Activated T-helper 1 cell treated with anti-CD3 and anti-CD28 coated beads, Interleukin-12 subunit alpha, Interleukin-12 subunit beta, Interleukin-2, Interleukin-4 antibody, amounts not matched to agents 30 ng/mL and 10 ng/mL and 1 ng/mL, durations not matched to agents 14 hours and 24 hours and 36 hours (primary cell): ENCODE measurements at regions of chr1 and their contacts with region 1.

Region 1: DNA sequence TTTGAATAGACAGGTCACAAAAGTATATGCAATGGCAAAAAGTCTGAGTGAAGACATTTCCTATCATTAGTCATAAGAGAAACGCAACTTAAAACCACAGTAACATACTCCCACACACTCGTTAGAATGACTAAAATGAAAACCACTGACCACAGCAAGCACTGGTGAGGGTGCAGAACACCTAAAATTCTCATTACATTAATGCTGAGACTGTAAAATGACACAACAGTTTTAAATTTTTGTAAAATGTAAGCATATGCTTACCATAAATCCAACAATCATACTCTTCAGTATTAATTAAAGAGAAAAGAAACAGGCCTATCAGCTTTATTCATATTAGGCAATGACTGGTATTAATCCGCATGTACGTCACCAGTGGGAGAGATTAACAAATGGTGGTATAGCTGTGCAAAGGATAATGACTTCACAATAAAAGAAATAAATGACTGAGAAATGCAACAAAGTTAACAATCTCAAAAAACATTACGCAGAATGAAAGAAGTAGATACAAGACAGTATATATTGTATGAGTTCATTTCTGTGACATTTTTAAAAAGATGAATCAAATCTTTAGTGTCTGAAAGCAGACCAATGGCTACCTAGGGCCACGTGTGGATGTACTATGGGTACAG is 253.5 kb downstream of the AKT3 start:
- DNase-seq: peak; percentile 32
- H3K4me3 Mint-ChIP-seq: peak overlapping the region; percentile 75
- H3K27ac Mint-ChIP-seq: peak overlapping the region; percentile 94
- H3K4me1 Mint-ChIP-seq: peaks cover 32% of the 10 kb centered on the region
- H3K27me3 Mint-ChIP-seq: no peaks in the 10 kb centered on the region

Region 2: GRCh38 chr1:243416495-243416894 is 180.1 kb before region 1 on chr1:
- intact Hi-C with region 1: loop called (anchors 1 kb)
- DNase-seq: no peak
- H3K4me3 Mint-ChIP-seq: peak overlapping the region; percentile 39
- H3K27ac Mint-ChIP-seq: peak overlapping the region; percentile 64
- H3K4me1 Mint-ChIP-seq: peaks cover 66% of the 10 kb centered on the region
- H3K27me3 Mint-ChIP-seq: no peaks in the 10 kb centered on the region

Region 3: DNA sequence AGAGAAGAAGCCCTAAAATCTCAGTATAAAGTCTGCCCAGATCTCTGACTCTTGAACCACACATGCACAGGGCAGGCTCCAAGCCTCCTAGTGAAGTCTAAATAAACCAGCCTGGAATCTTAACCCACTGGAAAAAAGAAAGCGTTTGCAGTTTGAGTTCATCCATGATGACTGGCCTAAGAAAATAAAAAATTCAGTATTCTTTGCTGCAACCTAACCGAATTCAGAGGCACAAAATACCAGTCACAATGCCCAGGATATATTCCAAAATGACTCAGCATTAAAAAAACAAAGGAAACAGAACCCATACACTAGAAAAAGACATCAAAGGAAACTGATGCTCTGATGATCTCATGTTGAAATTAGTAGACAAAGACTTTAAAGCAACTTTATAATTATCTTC is 71.5 kb before region 1 on chr1:
- intact Hi-C with region 1: loop called (anchors 5 kb)
- DNase-seq: no peak
- H3K4me3 Mint-ChIP-seq: no peak overlapping the region
- H3K27ac Mint-ChIP-seq: no peak overlapping the region
- H3K4me1 Mint-ChIP-seq: no peaks in the 10 kb centered on the region
- H3K27me3 Mint-ChIP-seq: no peaks in the 10 kb centered on the region

Region 4: DNA sequence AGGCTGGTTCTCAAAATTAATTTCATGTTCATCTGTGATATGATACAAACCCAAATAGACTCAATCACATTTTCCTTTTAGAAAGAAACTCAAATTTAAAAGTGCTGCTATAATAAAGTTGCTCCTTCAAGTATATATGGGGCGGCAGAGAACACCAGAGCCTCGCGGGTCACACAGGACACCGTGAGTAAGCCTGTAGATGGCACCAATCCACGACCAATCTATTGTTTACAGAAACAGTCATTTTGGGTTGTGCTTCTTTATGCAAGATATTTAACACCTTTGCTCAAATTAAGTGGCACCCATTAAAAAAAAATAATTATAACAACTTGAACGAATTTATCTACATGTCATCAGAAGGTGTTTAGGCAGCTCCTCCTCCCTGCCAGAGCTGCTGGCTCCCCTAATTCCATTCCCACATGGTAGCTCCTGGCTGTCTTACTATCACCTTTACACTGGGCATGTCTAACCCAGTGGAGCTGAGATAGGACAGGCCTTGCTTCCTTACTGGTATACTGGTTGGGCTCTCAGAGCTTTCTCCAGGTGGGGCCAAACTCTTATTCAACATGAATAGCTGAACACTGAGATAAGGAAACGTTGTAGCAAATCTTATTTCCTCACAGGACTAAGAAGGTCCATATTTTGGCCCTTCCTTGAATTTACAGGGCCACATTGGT is 53.7 kb before region 1 on chr1:
- intact Hi-C with region 1: no loop called
- DNase-seq: no peak
- H3K4me3 Mint-ChIP-seq: no peak overlapping the region
- H3K27ac Mint-ChIP-seq: no peak overlapping the region
- H3K4me1 Mint-ChIP-seq: no peaks in the 10 kb centered on the region
- H3K27me3 Mint-ChIP-seq: no peaks in the 10 kb centered on the region

Region 5: GRCh38 chr1:243837907-243838535 is 241.5 kb after region 1 on chr1:
- intact Hi-C with region 1: loop called (anchors 2 kb)
- DNase-seq: no peak
- H3K4me3 Mint-ChIP-seq: peak overlapping the region; percentile 9
- H3K27ac Mint-ChIP-seq: peak overlapping the region; percentile 34
- H3K4me1 Mint-ChIP-seq: peaks cover 33% of the 10 kb centered on the region
- H3K27me3 Mint-ChIP-seq: no peaks in the 10 kb centered on the region